WTC11 (cell line): ENCODE measurements at regions of chr19 and their contacts with region 1.

Region 1: DNA sequence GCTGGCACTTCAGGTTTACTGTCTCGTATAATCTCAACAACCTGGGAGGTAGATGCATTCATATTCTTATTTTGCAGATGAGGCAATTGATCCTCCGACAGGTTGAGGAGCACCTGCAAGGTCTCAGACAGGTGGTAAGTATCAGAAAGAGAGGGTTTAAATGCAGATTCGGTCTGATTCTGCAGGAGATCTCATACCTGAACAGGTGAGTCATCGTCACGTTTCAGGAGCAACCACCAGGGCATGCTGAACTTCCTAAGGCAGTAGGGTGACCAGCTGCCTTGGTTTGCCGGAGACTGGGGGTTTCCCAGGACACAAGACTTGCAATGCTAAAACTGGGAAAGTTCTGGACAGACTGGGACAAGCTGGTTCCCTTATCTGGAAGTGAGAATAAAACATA is 68.8 kb upstream of the TSHZ3 start:
- DNase-seq: peak; percentile 52
- ATAC-seq: peak; percentile 23
- H3K4me3 Mint-ChIP-seq: peak overlapping the region; percentile 34
- H3K27ac Mint-ChIP-seq: peak overlapping the region; percentile 100
- H3K4me1 Mint-ChIP-seq: peaks cover 81% of the 10 kb centered on the region
- H3K27me3 Mint-ChIP-seq: no peaks in the 10 kb centered on the region
- CTCF ChIP-seq: no peak

Region 2: DNA sequence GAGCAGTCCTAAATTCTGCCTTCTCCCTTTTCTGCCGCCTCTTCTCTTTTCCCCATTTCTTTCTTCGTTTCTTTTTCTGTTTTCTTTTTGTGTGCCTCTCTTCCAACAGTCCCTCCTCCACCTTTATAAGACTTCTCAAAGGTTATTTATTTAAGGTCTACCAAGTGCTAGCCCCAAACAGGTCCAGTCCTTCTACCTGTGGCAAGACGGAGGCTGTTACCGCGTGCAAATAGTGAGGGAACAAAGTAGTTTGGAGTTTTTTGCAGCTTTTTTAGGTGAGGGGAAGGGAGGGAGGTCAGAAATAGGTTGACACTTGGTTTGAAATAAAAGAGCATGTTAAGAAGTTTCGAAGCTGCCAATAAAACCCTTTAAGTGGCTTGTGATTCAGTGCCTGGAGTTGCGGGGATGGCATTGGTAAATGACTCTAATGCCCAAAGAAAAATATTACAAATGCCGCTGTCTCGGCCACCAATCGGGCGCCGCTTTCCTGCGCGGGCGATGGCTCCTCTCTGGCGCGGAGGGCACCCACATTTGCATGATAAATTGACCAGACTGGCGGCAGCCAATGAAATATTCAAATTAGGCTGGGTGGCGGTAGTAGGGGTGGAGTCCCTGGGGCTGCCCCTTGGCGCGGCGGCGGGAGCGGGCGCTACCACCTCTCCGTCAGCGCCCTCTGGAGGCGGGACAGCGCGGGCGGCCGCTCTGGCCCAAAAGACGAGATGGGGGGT is 61.3 kb before region 1 on chr19:
- CTCF ChIA-PET with region 1: interaction called, 17 read pairs
- POLR2A ChIA-PET with region 1: interaction called, 3 read pairs
- DNase-seq: peak; percentile 84
- ATAC-seq: peak; percentile 48
- H3K4me3 Mint-ChIP-seq: peak overlapping the region; percentile 97
- H3K27ac Mint-ChIP-seq: no peak overlapping the region; the same call in 1 of the 2 replicates
- H3K4me1 Mint-ChIP-seq: peaks cover 83% of the 10 kb centered on the region
- H3K27me3 Mint-ChIP-seq: peaks cover 51% of the 10 kb centered on the region
- CTCF ChIP-seq: peak; percentile 51; the same call in 1 of the 2 replicates

Region 3: DNA sequence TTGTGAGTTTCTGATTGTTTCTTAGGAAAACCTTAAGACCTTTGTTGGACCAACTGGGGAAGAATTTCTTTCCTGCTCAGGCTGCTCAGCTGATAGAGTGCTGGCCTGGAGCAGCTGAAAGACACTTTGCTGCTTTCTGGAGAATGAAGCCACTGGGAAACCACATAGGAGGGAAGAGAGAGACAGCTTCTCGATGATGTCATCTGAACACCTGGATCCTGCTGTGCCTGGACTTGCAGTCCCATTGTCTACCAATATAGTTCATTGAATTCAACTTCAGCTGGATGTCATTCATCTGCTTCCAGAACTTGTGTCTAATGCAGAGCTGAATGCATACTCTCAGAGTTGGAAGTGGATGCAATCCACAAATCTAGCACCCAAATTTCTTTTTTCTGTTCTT is 34.5 kb before region 1 on chr19:
- CTCF ChIA-PET with region 1: no interaction called
- POLR2A ChIA-PET with region 1: no interaction called
- DNase-seq: no peak
- ATAC-seq: no peak
- H3K4me3 Mint-ChIP-seq: no peak overlapping the region
- H3K27ac Mint-ChIP-seq: no peak overlapping the region
- H3K4me1 Mint-ChIP-seq: peaks cover 22% of the 10 kb centered on the region
- H3K27me3 Mint-ChIP-seq: no peaks in the 10 kb centered on the region; the same call in 1 of the 2 replicates
- CTCF ChIP-seq: no peak